ENCODE measurements at regions of chr13 and their contacts with region 1.

Region 1: DNA sequence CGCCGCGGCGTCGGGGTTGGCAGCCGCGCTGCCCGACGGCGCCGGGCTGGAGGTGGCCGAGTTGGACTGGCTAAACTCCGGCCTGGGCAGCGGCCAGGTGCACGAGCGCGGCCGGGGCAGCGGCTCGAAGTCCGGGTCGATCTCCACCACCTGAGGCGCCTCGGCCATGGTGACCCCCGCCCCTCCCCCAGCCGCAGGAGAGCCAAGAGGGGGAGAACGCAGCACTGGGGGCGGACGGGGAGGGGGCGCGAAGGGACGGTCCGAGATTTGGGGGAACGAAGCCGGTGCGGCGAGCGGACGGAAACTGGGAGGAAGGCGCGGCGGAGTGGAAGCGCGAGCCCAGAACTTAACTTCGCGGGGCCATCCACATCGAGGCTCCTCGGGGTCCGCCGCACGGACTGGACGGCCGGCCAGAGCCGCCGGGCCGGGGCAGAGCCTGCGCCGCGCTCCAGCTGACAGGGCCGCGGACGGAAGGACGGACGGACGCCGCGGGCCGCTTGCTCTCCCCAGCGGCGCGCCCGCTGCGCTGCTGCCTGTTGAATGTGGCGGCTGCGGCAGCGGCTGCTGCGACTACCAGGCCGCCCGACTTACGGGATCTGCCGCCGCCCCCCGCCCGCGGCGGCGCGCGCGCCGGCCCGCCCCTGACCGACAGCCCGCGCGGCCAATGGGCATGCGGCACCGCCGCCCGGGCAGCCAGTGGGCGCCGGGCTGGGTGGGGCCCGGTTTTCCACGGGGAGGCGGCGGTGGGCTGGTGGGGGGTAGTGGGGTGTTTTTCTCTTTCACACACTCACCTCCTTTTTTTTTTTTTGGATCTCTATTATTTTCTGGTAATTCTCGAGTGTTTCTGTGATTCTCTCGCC is at the start of gene FOXO1:
- DNase-seq: peak; percentile 84 to 97
- H3K4me3 ChIP-seq: peak within 1 kb of the TSS; percentile 95
- CTCF ChIP-seq: no peak
- POLR2A ChIP-seq: peak in 1 of 2 donors; percentile 68
- total RNA-seq, gene FOXO1: 43.6 to 75.9 (median 52.0) TPM

Region 2: GRCh38 chr13:39105110-39105509 is 1561.2 kb before region 1 on chr13:
- intact Hi-C with region 1: no loop called
- DNase-seq: no peak
- H3K4me3 ChIP-seq: no peak overlapping the region
- CTCF ChIP-seq: no peak
- POLR2A ChIP-seq: no peak

Region 3: GRCh38 chr13:40059540-40060232 is 606.6 kb before region 1 on chr13:
- intact Hi-C with region 1: loop called (anchors 10 kb)
- DNase-seq: no peak
- H3K4me3 ChIP-seq: no peak overlapping the region
- CTCF ChIP-seq: no peak
- POLR2A ChIP-seq: no peak

Region 4: GRCh38 chr13:40211589-40211974 is 454.7 kb before region 1 on chr13:
- intact Hi-C with region 1: no loop called
- DNase-seq: no peak
- H3K4me3 ChIP-seq: no peak overlapping the region
- CTCF ChIP-seq: no peak
- POLR2A ChIP-seq: no peak

Region 5: DNA sequence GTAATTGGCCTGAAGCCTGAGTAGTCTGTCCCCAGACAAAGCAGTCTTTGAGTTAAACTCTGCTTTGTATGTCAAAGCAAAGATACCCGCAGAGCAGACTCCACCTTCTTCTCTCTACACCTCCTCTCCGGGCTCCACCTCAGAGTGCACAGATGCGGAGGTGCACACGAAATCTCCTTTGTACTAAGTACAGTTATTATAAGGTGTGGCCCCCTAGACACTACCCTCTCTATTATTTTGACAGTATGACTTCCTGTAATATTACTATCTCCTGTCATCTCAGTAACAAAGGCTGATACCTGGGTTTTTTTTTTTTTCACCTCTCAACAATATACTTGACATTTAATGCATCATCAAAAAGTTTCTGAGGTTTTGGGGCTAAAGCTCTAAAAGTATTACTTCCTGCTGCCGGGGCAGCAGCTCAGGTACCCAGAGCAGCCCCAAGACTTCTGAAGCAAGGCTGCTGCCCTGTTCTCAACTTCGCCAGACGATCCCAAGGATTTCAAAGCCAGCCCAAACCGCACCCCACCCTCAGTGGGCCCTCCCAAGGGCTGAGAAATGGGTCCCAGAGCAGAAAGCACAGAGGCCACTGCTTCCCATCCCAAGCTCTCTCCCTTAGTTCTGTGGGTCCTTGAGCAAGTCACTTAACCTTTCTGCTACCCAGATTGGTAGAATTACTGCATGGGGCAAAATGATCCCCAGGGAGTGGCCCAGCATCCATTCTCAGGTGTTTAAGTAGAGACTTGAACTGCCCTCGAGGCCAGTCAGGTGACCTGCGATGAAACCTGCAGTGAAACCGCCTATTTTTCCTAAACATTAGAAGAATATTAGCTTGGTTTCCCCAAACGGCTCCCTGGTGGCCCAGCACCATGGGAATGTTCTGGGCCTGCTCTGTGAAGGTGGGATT is 180.4 kb before region 1 on chr13:
- intact Hi-C with region 1: no loop called
- DNase-seq: peak in 1 of 2 donors; percentile 78
- H3K4me3 ChIP-seq: no peak overlapping the region
- CTCF ChIP-seq: no peak
- POLR2A ChIP-seq: no peak

Region 6: DNA sequence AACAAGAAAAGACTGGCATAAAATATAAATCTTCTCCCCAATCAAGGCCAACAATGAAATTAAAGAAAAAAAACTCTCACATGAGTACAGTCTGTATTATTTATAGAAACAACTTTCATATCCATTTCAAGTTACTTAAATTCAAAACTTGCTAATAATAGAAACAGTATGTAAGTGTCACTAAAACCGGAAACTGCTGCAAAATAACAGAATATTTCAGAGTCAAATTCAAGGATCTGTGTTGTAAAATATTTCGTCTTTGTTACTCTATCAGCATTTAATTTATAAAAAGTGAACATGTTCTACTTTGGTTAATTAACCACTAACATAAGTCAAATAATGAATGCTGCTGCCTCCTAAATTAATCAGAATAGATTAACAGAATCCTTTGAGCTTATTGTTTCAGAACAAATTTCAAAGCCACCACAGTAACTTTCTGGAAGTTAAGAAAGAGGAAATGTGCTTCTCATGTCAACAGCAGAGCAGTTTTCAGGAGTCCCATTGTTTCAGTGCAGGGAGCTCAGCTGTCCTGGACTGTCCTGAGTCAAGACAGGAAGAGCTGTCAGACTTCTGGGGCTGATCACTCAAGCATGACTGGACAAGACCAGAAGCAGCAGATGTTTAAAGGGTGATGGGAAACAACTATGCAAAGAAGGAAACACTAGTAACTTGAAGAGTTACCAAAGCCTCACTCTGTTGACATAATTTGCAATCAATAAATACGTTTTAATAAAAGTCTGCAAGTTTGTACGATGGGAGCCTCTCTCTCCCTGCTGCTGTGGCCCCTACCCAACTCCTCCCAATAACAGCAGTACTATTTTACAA is 76.8 kb before region 1 on chr13:
- intact Hi-C with region 1: loop called (anchors 10 kb)
- DNase-seq: peak in 1 of 2 donors; percentile 45
- H3K4me3 ChIP-seq: no peak overlapping the region
- CTCF ChIP-seq: no peak
- POLR2A ChIP-seq: no peak

Region 7: DNA sequence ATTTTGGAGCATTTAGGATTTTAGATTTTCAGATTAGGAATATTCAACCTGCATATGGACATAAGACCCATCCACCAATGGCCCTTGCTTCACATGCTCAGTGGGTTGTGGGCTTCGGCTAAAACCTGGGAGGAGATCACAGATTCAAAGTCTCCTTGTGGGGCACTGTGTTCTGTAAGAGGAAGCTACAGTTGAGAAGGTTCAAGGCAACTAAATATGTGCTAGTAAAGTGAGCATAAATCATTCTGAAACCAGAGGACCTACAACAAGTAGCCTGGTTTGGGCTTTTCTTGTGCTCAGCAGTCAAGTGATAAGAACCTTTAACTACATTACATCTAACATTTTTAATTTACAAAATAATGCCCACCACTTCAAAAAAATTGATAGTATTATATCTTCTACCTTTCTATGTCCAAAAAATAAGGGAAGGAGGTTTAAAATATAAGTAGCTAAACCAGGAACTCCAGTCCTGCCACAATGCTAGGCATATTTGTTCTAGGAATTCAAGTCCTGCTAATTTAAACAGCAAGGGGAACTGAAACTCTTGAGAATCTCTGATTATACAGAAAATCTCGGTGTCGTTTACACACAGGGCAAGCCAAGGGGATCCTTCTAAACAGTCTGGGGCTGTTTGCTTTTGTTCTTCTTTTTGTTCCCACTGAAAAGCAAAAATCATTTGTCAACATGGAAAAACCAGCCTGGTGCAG is 36.4 kb before region 1 on chr13:
- intact Hi-C with region 1: no loop called
- DNase-seq: no peak
- H3K4me3 ChIP-seq: no peak overlapping the region
- CTCF ChIP-seq: no peak
- POLR2A ChIP-seq: no peak